K562 (cell line): ENCODE measurements at regions of chr6 and their contacts with region 1.

Region 1: DNA sequence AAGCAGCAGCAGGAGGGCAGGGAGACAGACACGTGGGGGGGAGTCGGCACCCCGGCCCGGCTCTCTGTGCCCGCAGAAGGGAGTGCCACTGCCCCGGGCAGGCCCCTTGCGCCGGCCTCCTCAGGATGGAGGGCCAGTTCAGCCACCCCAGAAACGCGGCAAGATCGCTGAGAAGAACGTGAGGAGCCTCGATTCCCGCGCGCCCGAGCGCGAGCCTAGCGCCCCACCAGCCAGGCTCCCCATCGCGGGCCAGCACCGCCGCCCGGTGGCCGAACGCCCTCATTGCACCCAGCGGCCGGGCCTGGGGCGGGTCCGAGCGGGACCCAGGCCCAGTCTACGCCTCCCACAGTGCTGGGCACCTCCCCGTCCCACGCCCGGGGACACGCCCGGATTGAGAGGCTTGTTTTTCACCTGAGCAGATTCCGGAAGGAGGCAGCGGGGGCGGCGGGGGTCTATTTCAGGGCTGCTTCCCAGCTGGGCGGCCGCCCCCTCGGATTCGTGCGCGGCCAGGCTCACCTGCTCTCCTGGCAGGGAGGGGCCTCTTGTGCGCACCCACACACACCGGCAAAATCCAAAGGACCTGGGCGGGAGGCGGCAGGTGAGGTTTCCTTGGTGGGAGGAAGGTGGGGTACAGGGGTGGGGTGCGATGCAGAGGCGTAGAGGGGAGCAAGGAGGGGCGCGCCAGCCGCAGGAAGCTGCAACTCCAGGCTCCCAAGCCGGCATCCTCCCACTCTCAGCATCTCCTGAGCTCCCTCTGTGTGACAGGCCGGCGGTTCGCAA is 9.0 kb upstream of the GRM4 start:
- DNase-seq: peak; percentile 75 to 97 (median 94)
- ATAC-seq: peak; percentile 96
- H3K4me3 ChIP-seq: no peak overlapping the region
- H3K27ac ChIP-seq: no peak overlapping the region
- H3K4me1 ChIP-seq: peaks cover 0 to 14% of the 10 kb centered on the region in 2 experiments; a peak in 2 of 5 replicates
- H3K27me3 ChIP-seq: peaks cover 22 to 68% of the 10 kb centered on the region in 2 experiments; a peak in 4 of 5 replicates
- CTCF ChIP-seq: peak; percentile 97 to 98 (median 98)
- EP300 ChIP-seq: no peak
- POLR2A ChIP-seq: no peak
- RAD21 ChIP-seq: peak; percentile 95 to 98

Region 2: DNA sequence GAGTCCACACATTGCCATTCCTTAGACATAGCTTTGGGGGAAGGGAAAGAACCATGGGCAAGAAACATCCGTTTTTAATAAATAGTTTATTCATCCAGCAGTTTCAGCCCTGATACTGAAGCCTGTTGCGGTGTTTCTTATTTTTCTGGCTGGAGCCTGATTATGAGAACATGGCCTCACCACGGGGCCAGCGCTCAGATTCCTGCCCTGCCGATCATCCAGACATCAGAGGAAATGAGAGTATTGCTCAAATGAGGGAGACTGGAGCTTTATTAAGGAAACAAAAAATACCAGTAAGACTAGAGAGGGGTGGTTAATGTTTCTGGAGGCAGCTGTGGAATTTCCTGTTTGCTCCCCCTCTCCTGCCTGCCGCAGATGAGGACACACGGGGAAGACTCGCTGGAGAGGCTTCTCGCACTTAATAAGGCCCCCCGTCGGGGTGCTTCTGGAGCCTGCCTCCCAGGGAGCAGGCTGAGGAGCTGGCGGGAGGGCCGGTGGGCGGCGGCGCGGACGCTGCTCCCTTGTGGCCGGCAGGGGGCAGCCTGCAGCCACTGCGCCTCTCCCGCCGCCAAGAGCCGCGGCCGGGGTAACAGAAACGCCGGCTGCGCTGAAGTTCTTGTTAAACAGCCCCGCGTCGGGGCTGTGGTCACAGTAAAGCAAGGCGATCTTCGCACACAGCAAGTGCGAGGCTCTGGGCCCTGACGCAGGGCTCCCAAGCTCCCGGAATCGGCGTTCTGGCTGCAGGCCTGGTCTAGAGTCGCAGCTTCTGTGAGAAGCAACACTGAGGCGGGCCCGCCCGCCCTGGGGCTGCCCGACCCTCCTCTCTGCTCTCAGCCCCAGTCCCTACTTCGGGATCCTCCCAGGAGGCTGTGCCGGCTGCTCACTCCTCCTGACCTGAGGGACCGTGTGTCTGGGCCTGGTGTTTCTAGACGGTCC is 383.4 kb before region 1 on chr6:
- CTCF ChIA-PET with region 1: interaction called, 10 read pairs
- POLR2A ChIA-PET with region 1: interaction called, 3 read pairs
- in situ Hi-C with region 1: no loop called
- intact Hi-C with region 1: loop called (anchors 2 kb)
- DNase-seq: peak; percentile 87 to 95 (median 92)
- ATAC-seq: peak; percentile 95
- H3K4me3 ChIP-seq: no peak overlapping the region
- H3K27ac ChIP-seq: no peak overlapping the region
- H3K4me1 ChIP-seq: peaks cover 3 to 15% of the 10 kb centered on the region in 2 experiments; a peak in 3 of 5 replicates
- H3K27me3 ChIP-seq: peaks cover 9 to 35% of the 10 kb centered on the region in 2 experiments; a peak in 4 of 5 replicates
- CTCF ChIP-seq: peak; percentile 88 to 97 (median 91)
- EP300 ChIP-seq: no peak
- POLR2A ChIP-seq: no peak; the same call in 1 of the 2 replicates
- RAD21 ChIP-seq: peak; percentile 88 to 94

Region 3: DNA sequence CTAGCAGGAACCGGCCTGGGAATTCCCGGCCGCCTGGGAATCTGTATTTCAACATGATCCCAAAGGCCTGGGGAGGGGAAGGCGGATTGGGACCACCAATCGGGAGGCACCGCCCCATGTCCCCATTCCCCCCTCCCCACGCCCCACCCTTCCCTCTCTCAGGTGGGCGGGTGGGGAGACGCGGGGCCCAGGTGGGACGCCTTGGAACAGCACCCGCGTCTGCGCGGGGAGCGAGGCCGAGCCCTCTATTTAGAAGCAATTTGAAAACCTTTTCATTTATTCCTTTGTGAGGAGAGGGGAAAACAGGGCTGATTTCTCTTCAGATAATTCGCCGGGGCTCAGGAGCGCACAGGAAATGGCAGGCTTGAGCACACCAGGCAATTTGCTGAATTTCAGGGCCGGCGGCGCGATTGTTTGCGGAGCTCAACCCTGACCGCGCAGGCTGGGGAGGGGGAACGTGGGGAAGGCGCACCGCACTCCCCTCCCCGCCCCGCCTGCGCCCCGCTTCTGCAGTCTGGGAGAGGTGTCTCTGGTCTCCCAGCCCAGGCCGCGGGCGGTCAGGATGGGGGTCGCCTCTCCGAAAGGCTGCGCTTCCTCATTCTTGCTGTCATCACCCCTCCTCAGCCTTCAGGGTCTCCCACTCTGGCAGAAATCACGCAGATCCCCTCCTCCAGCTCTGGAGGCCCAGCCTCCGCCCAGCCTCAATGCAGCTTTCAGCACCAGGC is 179.0 kb before region 1 on chr6:
- CTCF ChIA-PET with region 1: no interaction called
- POLR2A ChIA-PET with region 1: no interaction called
- in situ Hi-C with region 1: no loop called
- intact Hi-C with region 1: loop called (anchors 10 kb)
- DNase-seq: no peak
- ATAC-seq: no peak
- H3K4me3 ChIP-seq: no peak overlapping the region
- H3K27ac ChIP-seq: no peak overlapping the region
- H3K4me1 ChIP-seq: peaks cover 0 to 6% of the 10 kb centered on the region in 2 experiments; a peak in 1 of 5 replicates
- H3K27me3 ChIP-seq: peaks cover 41 to 53% of the 10 kb centered on the region in 2 experiments
- CTCF ChIP-seq: no peak
- EP300 ChIP-seq: no peak
- POLR2A ChIP-seq: no peak
- RAD21 ChIP-seq: no peak

Region 4: DNA sequence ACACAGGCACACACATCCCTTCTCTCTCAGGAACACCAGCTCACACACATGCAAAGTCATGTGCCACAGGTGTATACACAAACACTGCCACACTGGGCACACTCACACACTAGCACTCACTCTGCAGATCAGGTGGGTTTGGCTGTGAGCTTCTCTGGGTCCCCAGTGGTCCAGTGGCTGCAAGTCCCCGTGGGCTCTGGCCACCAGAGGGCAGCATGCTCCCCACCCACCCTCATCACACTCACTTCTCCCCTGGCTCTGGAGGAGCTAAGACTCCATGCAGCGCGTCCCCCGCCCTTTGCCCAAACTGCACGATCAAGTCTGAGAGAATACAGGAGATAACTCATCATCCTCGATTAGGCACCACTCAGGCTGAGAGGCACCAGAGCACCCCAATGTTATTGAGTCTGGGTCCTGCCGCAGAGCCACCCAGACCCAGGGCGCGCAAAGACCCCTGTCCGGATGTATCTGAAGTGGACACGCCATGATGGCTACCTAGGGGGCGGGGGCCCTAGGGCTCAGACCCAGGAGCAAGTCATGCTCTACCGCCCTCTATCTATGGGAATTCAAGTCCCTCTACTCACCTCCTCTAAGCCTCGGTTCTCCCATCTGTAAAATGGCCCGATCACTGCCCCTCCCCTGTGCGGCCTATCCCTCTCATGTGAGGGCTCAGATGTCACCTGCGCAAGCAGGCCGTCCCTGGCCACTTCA is 99.5 kb before region 1 on chr6:
- CTCF ChIA-PET with region 1: interaction called, 5 read pairs
- POLR2A ChIA-PET with region 1: interaction called, 4 read pairs
- in situ Hi-C with region 1: loop called (anchors 5 kb)
- intact Hi-C with region 1: loop called (anchors 1 kb)
- DNase-seq: peak; percentile 86 to 94 (median 92)
- ATAC-seq: peak; percentile 88
- H3K4me3 ChIP-seq: no peak overlapping the region
- H3K27ac ChIP-seq: no peak overlapping the region
- H3K4me1 ChIP-seq: peaks cover 5 to 25% of the 10 kb centered on the region in 2 experiments; a peak in 4 of 5 replicates
- H3K27me3 ChIP-seq: peaks cover 13 to 46% of the 10 kb centered on the region in 2 experiments; a peak in 4 of 5 replicates
- CTCF ChIP-seq: peak; percentile 90 to 96 (median 93)
- EP300 ChIP-seq: no peak
- POLR2A ChIP-seq: no peak
- RAD21 ChIP-seq: peak; percentile 43 to 71

Region 5: DNA sequence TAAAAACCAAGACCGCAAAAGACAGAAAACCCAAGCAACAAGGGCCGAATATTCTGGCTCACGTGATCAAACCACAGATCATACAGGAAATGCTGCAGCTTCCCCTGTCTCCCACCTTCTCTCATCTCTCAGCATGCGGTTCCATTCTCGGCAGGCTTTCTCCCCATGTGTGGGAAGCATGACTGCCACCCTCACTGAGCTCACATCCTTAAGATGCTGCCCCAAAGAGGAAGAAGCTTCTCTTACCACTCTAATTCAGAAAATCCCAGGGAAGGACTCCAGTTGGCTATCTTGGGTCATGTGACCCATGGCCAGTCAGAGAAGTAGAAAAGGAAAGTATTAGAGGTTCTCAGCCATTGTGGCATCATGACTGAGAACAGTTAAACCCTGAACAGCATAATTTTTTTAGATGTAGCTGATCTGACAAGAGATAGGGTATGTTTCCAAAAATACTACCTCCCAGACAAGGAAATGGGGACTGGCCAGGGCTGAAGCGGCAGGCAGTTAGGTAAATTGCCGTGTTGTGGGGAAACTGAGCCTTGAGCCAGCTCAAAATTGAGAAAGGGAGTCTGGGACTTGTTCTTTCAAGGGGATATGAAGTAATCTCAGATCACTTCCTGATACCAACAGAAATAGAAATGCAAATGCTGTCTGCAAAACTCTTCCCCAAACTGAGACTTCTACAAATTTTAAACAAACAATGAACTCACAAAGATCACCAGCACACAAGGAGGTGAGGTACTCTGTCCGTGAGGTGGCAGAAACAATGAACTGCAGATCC is 28.1 kb after region 1 on chr6:
- CTCF ChIA-PET with region 1: no interaction called
- POLR2A ChIA-PET with region 1: no interaction called
- in situ Hi-C with region 1: no loop called
- intact Hi-C with region 1: no loop called
- DNase-seq: peak in 2 of 4 experiments; percentile 50 to 56
- ATAC-seq: peak; percentile 46; the same call in 2 of the 3 replicates
- H3K4me3 ChIP-seq: no peak overlapping the region
- H3K27ac ChIP-seq: no peak overlapping the region
- H3K4me1 ChIP-seq: peaks cover 0 to 9% of the 10 kb centered on the region in 2 experiments; a peak in 1 of 5 replicates
- H3K27me3 ChIP-seq: 0 out of 5 replicates have a peak, but pooled peaks cover 2 to 11% of the 10 kb centered on the region in 2 experiments
- CTCF ChIP-seq: no peak
- EP300 ChIP-seq: no peak
- POLR2A ChIP-seq: no peak
- RAD21 ChIP-seq: no peak